Heart right ventricle (tissue), 16 donors: ENCODE measurements at regions of chr16 and their contacts with region 1.

Region 1: GRCh38 chr16:49748322-49748721 is 107.6 kb downstream of the ZNF423 start:
- DNase-seq: peak in 1 of 2 donors; percentile 32
- ATAC-seq: peak in 3 of 8 donors; percentile 6 to 29 (median 15)
- H3K4me3 ChIP-seq: no peak overlapping the region
- H3K27ac ChIP-seq: no peak overlapping the region
- H3K4me1 ChIP-seq: peaks cover 3 to 27% (median 17%) of the 10 kb centered on the region in 9 donors
- H3K27me3 ChIP-seq: peaks cover 0 to 27% (median 0%) of the 10 kb centered on the region in 7 donors
- CTCF ChIP-seq: no peak

Region 2: DNA sequence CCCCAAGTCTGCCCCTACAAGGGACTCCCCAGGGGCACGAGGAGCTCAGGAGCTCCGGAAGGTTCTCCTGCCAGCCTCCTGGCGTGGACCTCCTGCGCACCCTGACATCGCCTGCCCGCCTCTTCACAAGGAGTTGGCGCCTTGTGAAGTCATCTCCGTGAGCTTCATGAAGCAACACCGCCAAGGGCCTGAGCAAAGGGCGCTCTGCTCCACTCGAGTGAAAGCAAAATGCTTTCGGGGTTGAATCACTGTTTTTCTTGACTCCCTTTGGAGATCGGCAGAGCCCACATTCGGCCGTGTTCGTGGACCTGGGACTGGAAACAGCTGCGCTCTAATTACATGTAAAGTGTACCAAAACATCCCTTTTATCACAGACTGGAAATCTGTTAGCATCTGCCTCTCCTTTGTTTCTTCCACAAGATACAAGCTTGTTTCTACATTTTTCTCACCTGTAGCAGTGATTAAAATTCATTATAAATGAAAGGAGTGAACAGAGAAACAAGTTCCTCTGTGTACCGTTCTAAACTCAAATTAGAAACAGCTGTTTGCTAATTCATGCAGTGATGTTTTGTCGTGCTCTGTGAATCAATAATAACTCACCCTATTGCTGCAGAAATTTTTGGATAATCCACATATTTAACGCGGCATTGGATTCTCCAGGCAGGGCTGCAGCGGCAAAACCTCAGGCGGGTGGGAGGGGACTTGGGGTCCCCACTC is 95.7 kb before region 1 on chr16:
- intact Hi-C with region 1: loop called in 1 of 10 experiments (anchors 10 kb)
- DNase-seq: peak; percentile 40 to 56
- ATAC-seq: peak in 6 of 8 donors; percentile 67 to 88 (median 74)
- H3K4me3 ChIP-seq: peak overlapping the region in 1 of 10 donors; percentile 17
- H3K27ac ChIP-seq: peak overlapping the region; percentile 27 to 67 (median 46)
- H3K4me1 ChIP-seq: peaks cover 0 to 21% (median 0%) of the 10 kb centered on the region in 9 donors
- H3K27me3 ChIP-seq: no peaks in the 10 kb centered on the region
- CTCF ChIP-seq: no peak

Region 3: GRCh38 chr16:49693445-49693844 is 54.9 kb before region 1 on chr16:
- intact Hi-C with region 1: no loop called
- DNase-seq: no peak
- ATAC-seq: no peak
- H3K4me3 ChIP-seq: no peak overlapping the region
- H3K27ac ChIP-seq: no peak overlapping the region
- H3K4me1 ChIP-seq: peaks cover 2 to 14% (median 4%) of the 10 kb centered on the region in 9 donors
- H3K27me3 ChIP-seq: peaks cover 0 to 6% (median 0%) of the 10 kb centered on the region in 7 donors
- CTCF ChIP-seq: no peak

Region 4: GRCh38 chr16:49776085-49776595 is 27.8 kb after region 1 on chr16:
- intact Hi-C with region 1: no loop called
- DNase-seq: peak; percentile 60 to 62
- ATAC-seq: peak; percentile 80 to 92 (median 87)
- H3K4me3 ChIP-seq: peak overlapping the region in 4 of 10 donors; percentile 16 to 24 (median 20)
- H3K27ac ChIP-seq: peak overlapping the region in 9 of 10 donors; percentile 36 to 78 (median 70)
- H3K4me1 ChIP-seq: peaks cover 8 to 72% (median 57%) of the 10 kb centered on the region in 9 donors
- H3K27me3 ChIP-seq: no peaks in the 10 kb centered on the region
- CTCF ChIP-seq: no peak